ENCODE measurements at regions of chr6 and their contacts with region 1.

Region 1: DNA sequence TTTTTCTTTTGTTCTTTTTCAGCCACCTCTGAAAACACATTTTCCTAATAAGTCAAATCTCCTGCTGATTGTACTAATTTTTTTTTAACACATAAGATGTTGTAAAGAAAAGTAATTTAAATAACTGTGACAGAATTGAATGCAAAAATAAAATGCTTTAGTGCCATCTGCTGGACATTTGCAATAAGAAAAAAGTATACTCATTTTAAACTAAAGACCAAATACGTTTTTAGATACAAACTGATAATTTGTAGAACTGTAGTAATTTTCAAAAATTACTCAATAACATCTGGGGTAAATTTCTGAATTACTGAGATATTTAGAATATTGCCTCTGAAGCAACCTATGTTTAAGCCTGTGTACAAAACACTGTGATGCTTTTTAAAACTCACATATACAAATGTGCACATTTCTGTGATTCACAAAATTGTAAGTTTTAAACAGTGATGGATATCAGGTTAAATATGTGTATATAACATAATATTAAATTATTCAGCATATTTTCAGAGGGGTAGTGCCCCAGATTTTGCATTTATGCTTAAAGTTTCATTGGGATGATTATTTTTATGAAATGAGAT is 198.7 kb downstream of the RIMS1 start:
- DNase-seq: peak in 2 of 5 donors; percentile 39 to 43
- H3K4me3 ChIP-seq: no peak overlapping the region
- H3K27ac ChIP-seq: no peak overlapping the region
- H3K4me1 ChIP-seq: no peaks in the 10 kb centered on the region
- H3K27me3 ChIP-seq: no peaks in the 10 kb centered on the region
- CTCF ChIP-seq: peak; percentile 16

Region 2: DNA sequence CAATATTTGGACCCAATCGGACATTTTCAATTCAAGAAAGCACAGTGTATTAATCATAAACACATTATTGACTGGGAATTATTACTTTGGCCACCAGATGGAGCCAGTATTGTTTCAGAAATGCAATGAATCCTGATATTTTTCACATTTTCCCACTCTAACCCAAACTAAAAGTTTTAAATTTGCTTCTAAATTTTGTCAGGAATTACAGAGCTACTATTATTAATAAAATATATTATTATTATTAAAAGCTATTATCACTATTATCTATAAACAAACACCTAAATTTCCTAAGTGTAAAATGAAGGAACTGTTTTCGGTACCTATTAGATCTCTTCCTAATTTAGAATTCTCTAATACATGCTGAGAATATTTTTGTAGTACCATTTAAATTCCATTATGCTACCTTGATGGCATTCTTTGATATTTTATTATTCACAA is 551.1 kb before region 1 on chr6:
- intact Hi-C with region 1: loop called (anchors 10 kb)
- DNase-seq: peak in 2 of 5 donors; percentile 22 to 37
- H3K4me3 ChIP-seq: no peak overlapping the region
- H3K27ac ChIP-seq: no peak overlapping the region
- H3K4me1 ChIP-seq: no peaks in the 10 kb centered on the region
- H3K27me3 ChIP-seq: no peaks in the 10 kb centered on the region
- CTCF ChIP-seq: peak; percentile 52

Measured in kidney (tissue), 22 donors.